Dendritic cell treated with granulocyte-macrophage colony-stimulating factor and Interleukin-4, amounts not matched to agents 40 ng/mL and 50 ng/mL, for 4 days (primary cell): ENCODE measurements at regions of chr12 and their contacts with region 1.

Region 1: DNA sequence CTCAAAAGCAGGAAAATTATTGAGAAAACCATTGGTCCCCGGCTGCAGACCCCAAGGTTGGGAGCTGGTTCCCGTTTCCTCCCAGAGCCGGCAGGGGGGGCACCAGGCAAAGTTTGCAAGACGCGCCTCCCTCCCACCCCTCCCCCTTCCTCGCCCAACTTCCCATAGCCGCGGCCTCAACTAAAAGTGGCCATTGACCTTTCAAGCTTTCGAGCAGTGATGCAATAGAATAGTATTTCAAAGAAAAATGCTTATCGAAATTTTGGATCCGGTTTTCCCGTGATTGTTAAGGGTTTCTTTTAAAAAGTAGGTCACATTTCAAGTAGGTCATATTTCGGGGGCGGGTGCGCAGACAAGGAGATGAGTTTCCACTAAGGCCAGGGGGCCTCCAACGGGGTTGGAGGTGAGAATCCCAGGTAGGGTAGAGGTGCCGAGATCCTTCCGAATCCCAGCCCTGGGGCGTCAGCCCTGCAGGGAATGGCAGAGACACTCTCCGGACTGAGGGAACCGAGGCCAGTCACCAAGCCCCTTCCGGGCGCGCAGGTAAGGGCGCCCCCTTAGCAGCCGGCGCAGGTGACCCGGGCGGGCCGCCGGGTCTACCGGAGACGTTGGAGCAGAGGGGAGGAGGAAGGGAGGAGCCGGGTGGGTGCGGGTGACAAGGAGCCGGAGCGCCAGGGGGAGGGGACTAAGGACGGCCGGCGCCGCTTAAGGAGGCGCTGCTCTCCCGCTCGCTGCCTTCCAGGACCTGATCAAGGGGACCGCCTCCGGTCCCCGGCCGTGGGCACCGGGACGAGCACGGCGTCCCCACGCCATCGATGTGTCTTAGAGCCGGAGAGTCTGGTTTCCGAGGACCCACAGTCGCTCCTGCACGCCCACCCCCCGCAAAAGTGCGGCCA is 2.6 kb upstream of the SOCS2 start:
- H3K4me3 Mint-ChIP-seq: peak overlapping the region; percentile 86
- H3K27ac Mint-ChIP-seq: peak overlapping the region; percentile 93
- H3K4me1 Mint-ChIP-seq: peaks cover 30% of the 10 kb centered on the region
- H3K27me3 Mint-ChIP-seq: peaks cover 60% of the 10 kb centered on the region

Region 2: GRCh38 chr12:92928962-92929915 is 640.7 kb before region 1 on chr12 and contains the start of gene EEA1:
- intact Hi-C with region 1: loop called (anchors 10 kb)
- H3K4me3 Mint-ChIP-seq: peak within 1 kb of the TSS; percentile 88
- H3K27ac Mint-ChIP-seq: peak within 1 kb of the TSS; percentile 94
- H3K4me1 Mint-ChIP-seq: peaks cover 20% of the 10 kb centered on the region
- H3K27me3 Mint-ChIP-seq: no peaks in the 10 kb centered on the region

Region 3: DNA sequence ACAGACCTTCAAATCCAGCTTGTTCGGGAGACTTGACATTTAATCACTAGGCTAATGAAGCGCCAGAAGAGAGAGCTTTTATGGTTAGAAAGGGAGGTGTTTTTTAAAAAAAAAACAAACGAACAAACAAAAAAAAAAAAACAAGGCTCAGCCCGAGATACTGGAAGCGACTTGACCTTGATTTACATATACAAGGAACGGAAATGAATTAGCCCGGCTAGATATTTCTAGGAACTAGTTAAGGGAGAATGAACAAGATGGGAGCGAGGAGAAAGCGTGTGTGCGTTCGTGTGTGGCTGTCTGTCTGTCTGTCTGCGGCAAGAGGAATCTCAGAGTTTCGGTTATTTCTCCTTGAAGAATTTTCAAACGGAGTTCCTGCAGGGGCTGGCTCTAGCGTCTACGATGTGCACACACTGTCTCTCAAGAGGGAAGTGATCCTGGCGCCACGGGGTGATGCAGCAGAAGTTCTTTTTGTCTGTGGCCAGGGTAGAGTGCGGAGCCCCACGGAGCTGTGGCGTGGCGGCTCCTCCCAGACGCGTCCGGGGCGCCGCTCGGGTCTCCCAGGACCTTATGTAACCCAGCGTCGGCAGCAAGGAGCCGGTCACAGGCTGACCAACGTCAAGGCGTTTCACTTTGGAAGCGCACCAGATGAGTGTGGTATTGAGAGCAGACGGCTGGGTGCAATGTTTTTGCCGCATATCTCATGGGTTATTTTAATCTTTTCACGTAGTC is 21.4 kb after region 1 on chr12:
- intact Hi-C with region 1: loop called (anchors 2 kb)
- H3K4me3 Mint-ChIP-seq: peak overlapping the region; percentile 77
- H3K27ac Mint-ChIP-seq: peak overlapping the region; percentile 95
- H3K4me1 Mint-ChIP-seq: peaks cover 16% of the 10 kb centered on the region
- H3K27me3 Mint-ChIP-seq: peaks cover 60% of the 10 kb centered on the region

Region 4: DNA sequence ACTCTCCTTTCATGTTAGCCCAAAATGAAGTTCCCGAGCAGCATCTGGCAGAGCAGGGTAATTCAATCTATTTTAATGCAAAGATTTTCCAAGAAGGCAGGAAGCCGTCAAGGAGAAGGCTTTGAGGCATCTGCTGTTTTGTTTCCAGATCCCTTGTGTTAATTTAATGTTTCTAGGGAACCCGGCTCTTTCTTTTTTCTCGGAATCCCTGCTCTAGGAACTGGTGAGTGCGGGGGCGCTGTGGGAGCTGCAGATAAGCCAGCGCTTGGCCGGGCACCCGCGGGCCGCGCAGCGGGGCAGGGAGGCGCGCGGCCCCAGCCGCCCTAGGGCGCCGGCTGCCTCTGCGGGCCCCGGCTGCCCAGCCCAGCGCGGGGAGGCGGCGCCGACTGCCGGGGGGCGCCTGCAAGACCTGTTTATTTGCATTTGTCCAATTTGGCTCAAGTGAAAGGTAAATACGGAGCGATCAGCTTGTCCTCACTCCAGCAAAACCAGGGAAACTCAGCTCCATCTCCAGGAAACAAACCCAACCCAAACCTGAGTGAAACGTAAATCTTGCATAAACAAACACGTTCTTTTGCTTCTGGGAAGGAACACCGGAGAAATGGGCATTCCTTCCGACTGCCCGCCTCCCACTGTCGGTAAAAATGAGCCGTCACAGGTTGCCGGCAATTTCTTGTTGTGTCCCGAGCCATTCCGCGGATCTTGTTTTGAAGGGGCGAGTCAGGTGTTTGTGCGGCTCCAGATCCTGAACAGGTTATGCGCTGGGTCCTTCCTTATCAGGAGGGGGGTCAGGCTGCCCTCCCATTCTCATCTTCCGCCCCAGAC is 172.4 kb after region 1 on chr12:
- intact Hi-C with region 1: loop called (anchors 1 kb)
- H3K4me3 Mint-ChIP-seq: peak overlapping the region; percentile 80
- H3K27ac Mint-ChIP-seq: peak overlapping the region; percentile 93
- H3K4me1 Mint-ChIP-seq: peaks cover 50% of the 10 kb centered on the region
- H3K27me3 Mint-ChIP-seq: peaks cover 2% of the 10 kb centered on the region

Region 5: GRCh38 chr12:93979189-93979588 is 409.3 kb after region 1 on chr12:
- intact Hi-C with region 1: loop called (anchors 1 kb)
- H3K4me3 Mint-ChIP-seq: no peak overlapping the region
- H3K27ac Mint-ChIP-seq: no peak overlapping the region
- H3K4me1 Mint-ChIP-seq: no peaks in the 10 kb centered on the region
- H3K27me3 Mint-ChIP-seq: peaks cover 2% of the 10 kb centered on the region

Region 6: DNA sequence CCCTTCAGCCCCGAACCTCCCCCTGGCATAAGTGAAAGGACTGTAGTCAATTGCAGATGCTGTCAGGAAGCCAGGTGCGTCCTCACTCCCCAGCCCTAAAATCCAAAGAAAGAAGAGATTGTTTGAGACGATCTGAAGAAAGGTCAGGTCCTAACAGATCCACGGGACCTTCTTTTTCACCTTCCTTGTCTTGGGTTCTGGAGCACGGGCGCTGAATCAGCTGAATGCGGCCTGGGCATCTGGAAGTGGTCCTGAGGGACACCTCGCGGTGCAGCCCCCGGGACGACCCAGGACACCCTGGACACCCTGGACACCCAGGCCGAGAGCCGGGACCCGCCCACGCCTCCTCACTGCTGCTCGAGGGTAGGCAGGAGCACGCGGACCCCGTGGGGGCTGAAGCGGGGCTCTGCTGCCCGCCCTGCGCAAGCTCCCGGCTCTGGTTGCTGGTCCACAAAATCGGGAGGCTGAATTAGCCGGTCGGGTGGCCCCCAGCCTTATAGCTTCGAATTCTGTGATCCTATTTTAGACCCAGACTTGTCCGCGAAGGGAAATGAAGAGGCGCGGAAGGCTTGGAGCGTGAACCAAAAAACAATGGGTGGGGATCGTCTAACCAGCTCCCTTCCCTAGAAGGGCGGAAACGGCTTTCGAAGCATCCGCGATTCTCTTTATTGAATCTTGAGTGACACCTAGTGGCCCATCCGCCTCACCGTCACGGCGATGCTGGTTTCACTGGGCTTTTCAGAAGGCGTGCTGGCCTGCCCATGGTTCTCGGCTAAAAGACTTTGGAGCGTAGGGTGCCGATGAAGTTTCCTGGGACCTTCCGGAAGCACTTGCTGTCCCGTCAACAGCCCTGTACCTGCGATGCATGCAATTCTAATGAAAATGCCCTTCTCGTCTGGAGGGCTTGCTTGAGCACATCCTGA is 532.1 kb after region 1 on chr12:
- intact Hi-C with region 1: loop called (anchors 1 kb)
- H3K4me3 Mint-ChIP-seq: peak overlapping the region; percentile 68
- H3K27ac Mint-ChIP-seq: no peak overlapping the region
- H3K4me1 Mint-ChIP-seq: peaks cover 23% of the 10 kb centered on the region
- H3K27me3 Mint-ChIP-seq: peaks cover 50% of the 10 kb centered on the region